CD4-positive, alpha-beta memory T cell (primary cell): ENCODE measurements at regions of chr1 and their contacts with region 1.

Region 1: GRCh38 chr1:21270086-21270689 is 20.1 kb downstream of the ECE1 start:
- DNase-seq: peak; percentile 73 to 82 (median 79)
- H3K4me3 ChIP-seq: no peak overlapping the region
- H3K4me3 Mint-ChIP-seq: peak overlapping the region in 1 of 8 donors; percentile 16
- H3K27ac ChIP-seq: no peak overlapping the region
- H3K27ac Mint-ChIP-seq: peak overlapping the region; percentile 28 to 80 (median 73)
- H3K4me1 ChIP-seq: peaks cover 18% of the 10 kb centered on the region
- H3K4me1 Mint-ChIP-seq: peaks cover 16 to 41% (median 29%) of the 10 kb centered on the region in 4 donors
- H3K27me3 ChIP-seq: no peaks in the 10 kb centered on the region
- H3K27me3 Mint-ChIP-seq: no peaks in the 10 kb centered on the region

Region 2: GRCh38 chr1:20640183-20640597 is 630.0 kb before region 1 on chr1:
- CTCF ChIA-PET with region 1: no interaction called
- POLR2A ChIA-PET with region 1: no interaction called
- intact Hi-C with region 1: no loop called
- DNase-seq: peak; percentile 46 to 58 (median 54)
- H3K4me3 ChIP-seq: no peak overlapping the region
- H3K4me3 Mint-ChIP-seq: peak overlapping the region in 1 of 8 donors; percentile 21
- H3K27ac ChIP-seq: no peak overlapping the region
- H3K27ac Mint-ChIP-seq: peak overlapping the region in 1 of 7 donors; percentile 31
- H3K4me1 ChIP-seq: no peaks in the 10 kb centered on the region
- H3K4me1 Mint-ChIP-seq: peaks cover 0 to 6% (median 5%) of the 10 kb centered on the region in 4 donors
- H3K27me3 ChIP-seq: no peaks in the 10 kb centered on the region
- H3K27me3 Mint-ChIP-seq: no peaks in the 10 kb centered on the region

Region 3: GRCh38 chr1:21244986-21245687 is 25.1 kb before region 1 on chr1:
- CTCF ChIA-PET with region 1: interaction called, 10 read pairs
- POLR2A ChIA-PET with region 1: no interaction called
- intact Hi-C with region 1: no loop called
- DNase-seq: peak in 1 of 5 donors; percentile 10
- H3K4me3 ChIP-seq: no peak overlapping the region
- H3K4me3 Mint-ChIP-seq: no peak overlapping the region
- H3K27ac ChIP-seq: no peak overlapping the region
- H3K27ac Mint-ChIP-seq: peak overlapping the region in 3 of 7 donors; percentile 12 to 53 (median 50)
- H3K4me1 ChIP-seq: no peaks in the 10 kb centered on the region
- H3K4me1 Mint-ChIP-seq: peaks cover 0 to 3% (median under 1%) of the 10 kb centered on the region in 4 donors
- H3K27me3 ChIP-seq: no peaks in the 10 kb centered on the region
- H3K27me3 Mint-ChIP-seq: no peaks in the 10 kb centered on the region

Region 4: DNA sequence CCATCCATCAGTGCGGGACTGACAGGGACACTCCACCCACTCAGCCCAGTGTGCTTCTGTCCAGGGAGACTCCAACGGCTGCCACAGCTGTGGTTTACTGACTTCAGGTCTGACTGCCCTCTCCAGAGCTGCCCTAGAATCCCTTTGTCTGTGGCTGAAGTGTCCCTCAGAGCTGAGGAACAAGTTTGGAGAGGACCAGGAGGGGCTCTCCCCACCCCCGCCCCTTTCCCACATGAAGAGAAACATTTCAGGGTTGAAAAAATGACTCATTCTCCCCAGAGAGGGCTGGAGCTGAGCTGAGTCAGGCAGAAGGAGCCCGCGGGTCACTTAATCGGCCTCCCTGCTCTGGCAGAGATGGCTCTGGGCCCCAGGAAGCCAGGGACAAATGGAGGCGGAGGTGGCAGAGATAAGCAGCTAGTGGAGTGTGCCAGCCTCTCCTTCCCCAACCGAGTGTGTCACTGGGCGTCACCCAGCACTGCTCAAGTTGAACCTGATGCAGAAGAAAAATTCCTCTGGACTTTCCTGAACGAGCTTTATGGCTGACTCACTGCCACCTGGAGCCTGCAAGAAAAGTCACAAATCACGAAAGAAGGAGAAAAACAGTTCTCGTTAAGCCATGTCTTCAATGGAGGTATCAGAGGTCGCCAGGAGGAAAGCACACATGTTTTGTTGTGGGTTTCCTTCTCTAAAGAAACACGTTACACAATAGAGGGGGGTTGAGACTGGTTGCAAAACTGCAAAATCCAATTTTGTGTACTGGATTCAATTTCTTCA is 54.4 kb after region 1 on chr1:
- CTCF ChIA-PET with region 1: interaction called, 86 read pairs
- POLR2A ChIA-PET with region 1: interaction called, 20 read pairs
- intact Hi-C with region 1: no loop called
- DNase-seq: peak; percentile 24 to 82 (median 48)
- H3K4me3 ChIP-seq: peak overlapping the region; percentile 9 to 25
- H3K4me3 Mint-ChIP-seq: peak overlapping the region; percentile 65 to 93 (median 84)
- H3K27ac ChIP-seq: peak overlapping the region; percentile 36
- H3K27ac Mint-ChIP-seq: peak overlapping the region; percentile 92 to 96 (median 94)
- H3K4me1 ChIP-seq: peaks cover 71% of the 10 kb centered on the region
- H3K4me1 Mint-ChIP-seq: peaks cover 41 to 95% (median 75%) of the 10 kb centered on the region in 4 donors
- H3K27me3 ChIP-seq: no peaks in the 10 kb centered on the region
- H3K27me3 Mint-ChIP-seq: no peaks in the 10 kb centered on the region

Region 5: GRCh38 chr1:21344750-21345443 is 74.7 kb after region 1 on chr1:
- CTCF ChIA-PET with region 1: interaction called, 22 read pairs
- POLR2A ChIA-PET with region 1: interaction called, 25 read pairs
- intact Hi-C with region 1: no loop called
- DNase-seq: peak in 1 of 5 donors; percentile 48
- H3K4me3 ChIP-seq: peak overlapping the region; percentile 57 to 80
- H3K4me3 Mint-ChIP-seq: peak overlapping the region; percentile 79 to 92 (median 90)
- H3K27ac ChIP-seq: peak overlapping the region; percentile 59
- H3K27ac Mint-ChIP-seq: peak overlapping the region; percentile 85 to 93 (median 90)
- H3K4me1 ChIP-seq: peaks cover 53% of the 10 kb centered on the region
- H3K4me1 Mint-ChIP-seq: peaks cover 31 to 48% (median 40%) of the 10 kb centered on the region in 4 donors
- H3K27me3 ChIP-seq: no peaks in the 10 kb centered on the region
- H3K27me3 Mint-ChIP-seq: no peaks in the 10 kb centered on the region

Region 6: GRCh38 chr1:21362096-21362495 is 91.9 kb after region 1 on chr1:
- CTCF ChIA-PET with region 1: interaction called, 132 read pairs
- POLR2A ChIA-PET with region 1: no interaction called
- intact Hi-C with region 1: no loop called
- DNase-seq: no peak
- H3K4me3 ChIP-seq: no peak overlapping the region
- H3K4me3 Mint-ChIP-seq: no peak overlapping the region
- H3K27ac ChIP-seq: no peak overlapping the region
- H3K27ac Mint-ChIP-seq: peak overlapping the region in 2 of 7 donors; percentile 41 to 60
- H3K4me1 ChIP-seq: no peaks in the 10 kb centered on the region
- H3K4me1 Mint-ChIP-seq: peaks cover 4 to 5% (median 5%) of the 10 kb centered on the region in 4 donors
- H3K27me3 ChIP-seq: no peaks in the 10 kb centered on the region
- H3K27me3 Mint-ChIP-seq: no peaks in the 10 kb centered on the region

Region 7: DNA sequence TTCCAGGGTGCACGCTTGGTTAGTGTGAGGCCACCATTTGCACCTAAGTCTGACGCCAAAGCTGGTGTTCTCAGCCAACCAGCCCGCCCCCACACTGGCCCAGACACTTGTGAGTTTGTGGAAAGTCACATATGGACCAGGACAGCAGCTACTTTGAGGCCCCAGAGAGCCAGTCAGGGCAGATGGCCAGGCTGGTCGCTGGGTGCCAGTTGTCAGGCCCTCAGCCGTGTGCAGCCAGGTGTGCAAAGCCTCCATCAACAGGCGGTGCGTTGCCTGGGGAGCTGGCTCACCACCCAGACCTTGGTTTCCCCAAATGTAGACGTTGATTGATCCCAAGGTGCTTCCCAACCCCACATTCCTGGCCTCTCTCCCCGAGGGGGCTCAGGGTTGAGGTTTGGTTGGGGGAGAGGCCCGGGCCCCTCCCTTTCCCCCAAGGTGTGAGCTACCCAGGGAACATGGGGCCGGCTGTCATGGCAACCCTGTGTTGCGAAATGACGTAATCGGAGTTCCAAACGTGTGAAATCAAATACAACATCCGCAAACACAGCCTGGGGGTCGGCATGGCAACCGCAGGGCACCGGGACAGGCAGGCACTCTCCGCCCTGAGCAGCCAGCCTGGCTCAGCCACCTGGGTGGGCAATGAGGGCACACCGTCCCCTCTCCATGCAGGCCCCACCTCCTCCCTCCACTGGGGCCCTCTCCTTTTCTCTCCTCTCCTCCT is 914.9 kb after region 1 on chr1:
- CTCF ChIA-PET with region 1: no interaction called
- POLR2A ChIA-PET with region 1: no interaction called
- intact Hi-C with region 1: no loop called
- DNase-seq: no peak
- H3K4me3 ChIP-seq: no peak overlapping the region
- H3K4me3 Mint-ChIP-seq: no peak overlapping the region
- H3K27ac ChIP-seq: no peak overlapping the region
- H3K27ac Mint-ChIP-seq: no peak overlapping the region
- H3K4me1 ChIP-seq: no peaks in the 10 kb centered on the region
- H3K4me1 Mint-ChIP-seq: peaks cover 0 to 1% (median 0%) of the 10 kb centered on the region in 4 donors
- H3K27me3 ChIP-seq: no peaks in the 10 kb centered on the region
- H3K27me3 Mint-ChIP-seq: peaks cover 19 to 32% of the 10 kb centered on the region in 2 donors